Activated T-helper 2 cell treated with anti-CD3 and anti-CD28 coated beads, Interferon-gamma antibody, Interleukin-2, Interleukin-4, amounts not matched to agents 10 μg/mL and 5 μg/mL and 100 μg/mL, durations not matched to agents 14 hours and 24 hours and 36 hours (primary cell): ENCODE measurements at regions of chr16 and their contacts with region 1.

Region 1: GRCh38 chr16:78962457-78962929 is 638.0 kb downstream of the MAF start:
- DNase-seq: no peak
- H3K4me3 Mint-ChIP-seq: no peak overlapping the region
- H3K27ac Mint-ChIP-seq: peak overlapping the region; percentile 6
- H3K4me1 Mint-ChIP-seq: peaks cover 12% of the 10 kb centered on the region
- H3K27me3 Mint-ChIP-seq: no peaks in the 10 kb centered on the region

Region 2: GRCh38 chr16:78866521-78866920 is 96.0 kb before region 1 on chr16:
- intact Hi-C with region 1: no loop called
- DNase-seq: no peak
- H3K4me3 Mint-ChIP-seq: no peak overlapping the region
- H3K27ac Mint-ChIP-seq: no peak overlapping the region
- H3K4me1 Mint-ChIP-seq: no peaks in the 10 kb centered on the region
- H3K27me3 Mint-ChIP-seq: no peaks in the 10 kb centered on the region

Region 3: GRCh38 chr16:79008036-79008868 is 45.8 kb after region 1 on chr16:
- intact Hi-C with region 1: loop called (anchors 1 kb)
- DNase-seq: no peak
- H3K4me3 Mint-ChIP-seq: no peak overlapping the region
- H3K27ac Mint-ChIP-seq: peak overlapping the region; percentile 54
- H3K4me1 Mint-ChIP-seq: peaks cover 24% of the 10 kb centered on the region
- H3K27me3 Mint-ChIP-seq: no peaks in the 10 kb centered on the region

Region 4: GRCh38 chr16:79018650-79019465 is 56.4 kb after region 1 on chr16:
- intact Hi-C with region 1: no loop called
- DNase-seq: no peak
- H3K4me3 Mint-ChIP-seq: no peak overlapping the region
- H3K27ac Mint-ChIP-seq: no peak overlapping the region
- H3K4me1 Mint-ChIP-seq: no peaks in the 10 kb centered on the region
- H3K27me3 Mint-ChIP-seq: peaks cover 1% of the 10 kb centered on the region

Region 5: DNA sequence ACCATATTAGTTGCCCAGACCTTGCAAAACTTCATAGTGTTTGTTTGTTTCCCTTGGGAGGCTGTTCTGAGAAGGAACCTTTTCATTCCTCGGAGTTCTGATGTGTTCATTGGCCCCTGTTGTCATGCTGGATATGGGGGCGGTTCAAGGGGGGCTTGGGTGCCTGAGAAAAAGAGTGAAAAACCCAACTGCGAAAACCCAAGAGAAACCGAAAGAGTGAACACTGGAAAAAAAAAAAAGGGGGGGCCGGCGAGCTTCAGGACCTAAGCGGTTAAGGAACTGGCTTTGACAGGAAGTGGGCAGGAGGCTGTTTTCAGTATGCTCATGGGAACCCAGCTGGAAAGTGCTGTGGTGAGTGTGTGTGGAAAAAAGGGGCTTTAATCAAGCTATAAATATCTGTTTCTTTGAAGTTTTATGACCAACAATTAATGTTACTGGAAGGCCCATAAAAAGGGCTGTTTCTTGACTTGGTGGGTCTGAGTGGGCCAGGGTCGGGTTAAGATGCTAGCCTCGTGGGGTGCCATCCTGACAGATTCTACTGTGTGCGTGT is 127.3 kb after region 1 on chr16:
- intact Hi-C with region 1: loop called (anchors 2 kb)
- DNase-seq: peak; percentile 69
- H3K4me3 Mint-ChIP-seq: peak overlapping the region; percentile 51
- H3K27ac Mint-ChIP-seq: peak overlapping the region; percentile 89
- H3K4me1 Mint-ChIP-seq: peaks cover 53% of the 10 kb centered on the region
- H3K27me3 Mint-ChIP-seq: no peaks in the 10 kb centered on the region